ENCODE measurements at regions of chr7 and their contacts with region 1.

Region 1: DNA sequence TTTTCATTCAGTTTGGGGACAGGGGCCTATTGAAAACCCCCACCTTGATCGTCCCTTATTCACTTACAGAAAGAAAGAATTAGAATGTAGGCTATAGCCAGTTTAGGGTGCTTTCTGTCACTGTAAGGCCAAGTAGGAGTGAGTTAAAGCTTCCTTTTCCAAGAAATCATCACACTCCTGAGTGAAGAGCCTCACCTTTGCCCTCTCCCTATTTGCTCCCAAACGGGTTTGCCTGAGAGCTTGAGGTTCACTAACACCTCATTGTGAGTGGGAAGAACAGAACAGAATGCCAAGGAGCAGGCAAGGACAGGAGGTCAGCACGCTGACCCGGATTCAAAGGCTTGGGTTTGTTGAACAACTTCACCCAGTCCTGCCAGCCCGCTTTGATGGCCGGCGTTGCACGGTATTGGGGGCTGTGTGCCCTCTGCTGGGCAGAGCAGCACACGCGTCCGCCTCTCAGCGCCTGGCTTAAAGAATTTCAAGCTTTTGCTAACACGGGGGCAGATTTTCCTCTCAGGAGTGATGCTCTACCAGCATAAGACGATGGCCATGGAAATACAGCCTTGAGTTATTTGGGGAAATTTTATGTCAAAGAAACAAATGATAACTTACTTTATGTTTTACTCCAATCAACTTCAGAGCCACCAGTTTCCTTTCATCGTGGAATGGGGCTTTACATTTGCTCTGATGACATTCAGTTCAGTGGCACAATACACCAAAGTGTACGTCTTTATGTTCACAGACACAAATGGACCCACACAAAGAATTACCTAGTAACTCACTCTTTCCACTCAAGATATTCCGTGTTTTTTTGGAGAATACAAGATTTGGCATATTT is 470.0 kb downstream of the SUGCT start:
- DNase-seq: peak; percentile 22 to 76
- H3K4me3 ChIP-seq: no peak overlapping the region
- H3K27ac ChIP-seq: peak overlapping the region in 1 of 2 donors; percentile 38
- H3K4me1 ChIP-seq: peaks cover 0 to 12% (median 5%) of the 10 kb centered on the region in 4 donors
- H3K27me3 ChIP-seq: no peaks in the 10 kb centered on the region
- CTCF ChIP-seq: peak; percentile 58 to 65

Region 2: GRCh38 chr7:40232242-40232893 is 372.5 kb before region 1 on chr7:
- intact Hi-C with region 1: loop called (anchors 10 kb)
- DNase-seq: no peak
- H3K4me3 ChIP-seq: no peak overlapping the region
- H3K27ac ChIP-seq: peak overlapping the region; percentile 52 to 55
- H3K4me1 ChIP-seq: peaks cover 0 to 8% (median 0%) of the 10 kb centered on the region in 4 donors
- H3K27me3 ChIP-seq: no peaks in the 10 kb centered on the region
- CTCF ChIP-seq: peak; percentile 66 to 79

Region 3: DNA sequence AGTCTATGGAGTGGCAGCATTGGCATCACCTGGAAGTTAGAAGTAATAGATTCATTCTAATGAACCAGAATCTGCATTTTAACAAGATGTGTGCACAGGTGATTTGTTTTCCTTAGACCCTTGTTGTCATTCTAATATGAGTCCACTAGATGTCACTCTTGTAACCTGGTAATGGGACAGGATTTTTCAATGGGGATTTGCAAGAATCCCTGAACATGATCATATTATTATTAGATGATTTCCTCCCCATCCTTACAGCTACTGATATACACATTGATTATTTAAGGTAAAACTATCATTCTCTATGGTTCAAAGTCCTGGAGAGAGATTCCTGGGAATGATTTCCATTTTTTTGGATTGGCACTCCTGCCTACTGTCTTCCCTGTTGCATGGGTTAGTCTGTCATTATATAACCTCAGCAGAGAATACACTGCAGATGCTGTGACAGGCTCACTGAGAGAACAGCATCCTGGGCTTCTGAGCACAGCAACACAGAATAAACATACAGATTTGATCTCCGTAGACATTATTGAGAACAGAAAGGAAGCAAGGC is 275.1 kb before region 1 on chr7:
- intact Hi-C with region 1: loop called (anchors 10 kb)
- DNase-seq: no peak
- H3K4me3 ChIP-seq: no peak overlapping the region
- H3K27ac ChIP-seq: peak overlapping the region; percentile 47 to 70
- H3K4me1 ChIP-seq: peaks cover 0 to 55% (median 8%) of the 10 kb centered on the region in 4 donors
- H3K27me3 ChIP-seq: no peaks in the 10 kb centered on the region
- CTCF ChIP-seq: peak; percentile 76 to 86